Ascending aorta (tissue), 2 donors: ENCODE measurements at regions of chr10 and their contacts with region 1.

Region 1: DNA sequence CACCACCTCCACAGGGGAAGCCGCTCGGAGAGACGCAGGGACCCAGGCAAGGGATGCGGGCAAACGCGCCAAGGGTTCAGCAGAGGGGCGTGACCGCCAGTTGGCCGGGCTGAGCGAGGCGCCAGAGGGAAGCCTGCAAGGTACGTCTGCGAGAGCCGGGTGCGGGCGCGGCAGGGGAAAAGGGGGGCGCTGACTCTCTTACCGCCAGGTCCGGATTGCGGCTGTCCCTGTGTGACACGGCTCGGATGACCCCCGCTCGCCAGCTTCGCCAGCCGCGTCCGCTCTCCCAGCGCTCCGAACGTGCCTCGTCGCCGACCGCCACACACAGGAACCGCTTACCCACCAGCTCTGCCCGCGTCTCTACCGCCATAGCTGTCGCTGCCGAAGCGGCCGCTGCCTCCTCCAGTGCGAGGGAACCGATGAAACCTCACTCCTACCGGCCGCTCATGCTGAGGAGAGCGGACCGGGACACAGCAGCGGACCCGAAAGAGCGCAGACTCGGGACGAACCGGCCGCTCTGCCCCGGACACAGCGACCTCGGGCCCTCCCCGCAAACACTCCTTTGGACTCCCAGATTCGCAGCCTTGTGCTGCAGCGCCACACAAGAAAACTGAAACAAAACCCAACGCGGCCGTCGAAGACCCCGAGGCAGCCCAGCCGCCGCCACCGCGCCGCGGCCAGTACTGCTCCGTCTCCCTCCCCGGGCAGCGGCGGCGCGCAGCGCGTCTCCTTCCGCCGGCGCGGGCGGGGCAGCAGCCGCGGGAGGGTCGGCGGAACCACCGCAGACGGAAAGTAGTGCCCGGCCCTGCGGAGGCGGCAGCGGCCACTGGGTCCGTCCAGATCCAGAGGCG is at the start of gene JMJD1C:
- DNase-seq: peak; percentile 21 to 88
- H3K4me3 ChIP-seq: peak within 1 kb of the TSS; percentile 88 to 100
- H3K27ac ChIP-seq: peak within 1 kb of the TSS; percentile 88 to 99
- H3K4me1 ChIP-seq: peaks cover 0 to 19% of the 10 kb centered on the region in 2 donors
- H3K27me3 ChIP-seq: no peaks in the 10 kb centered on the region
- CTCF ChIP-seq: no peak
- total RNA-seq, gene JMJD1C: 65.0 TPM

Region 2: GRCh38 chr10:63217120-63217605 is 248.4 kb before region 1 on chr10:
- intact Hi-C with region 1: loop called (anchors 5 kb)
- DNase-seq: no peak
- H3K4me3 ChIP-seq: no peak overlapping the region
- H3K27ac ChIP-seq: no peak overlapping the region
- H3K4me1 ChIP-seq: no peaks in the 10 kb centered on the region
- H3K27me3 ChIP-seq: no peaks in the 10 kb centered on the region
- CTCF ChIP-seq: peak; percentile 49 to 70 (median 56)

Region 3: GRCh38 chr10:63268798-63269503 is 196.6 kb before region 1 on chr10:
- intact Hi-C with region 1: loop called (anchors 5 kb)
- DNase-seq: peak; percentile 81 to 95
- H3K4me3 ChIP-seq: peak overlapping the region; percentile 55 to 64
- H3K27ac ChIP-seq: peak overlapping the region; percentile 76 to 84
- H3K4me1 ChIP-seq: no peaks in the 10 kb centered on the region
- H3K27me3 ChIP-seq: no peaks in the 10 kb centered on the region
- CTCF ChIP-seq: peak; percentile 20 to 54 (median 45)

Region 4: GRCh38 chr10:63521416-63522276 is 56.1 kb after region 1 on chr10:
- intact Hi-C with region 1: loop called (anchors 2 kb)
- DNase-seq: peak in 1 of 2 donors; percentile 76
- H3K4me3 ChIP-seq: peak overlapping the region; percentile 81 to 90
- H3K27ac ChIP-seq: peak overlapping the region; percentile 97
- H3K4me1 ChIP-seq: peaks cover 0 to 23% of the 10 kb centered on the region in 2 donors
- H3K27me3 ChIP-seq: no peaks in the 10 kb centered on the region
- CTCF ChIP-seq: no peak

Region 5: GRCh38 chr10:63579371-63580014 is 114.0 kb after region 1 on chr10:
- intact Hi-C with region 1: loop called (anchors 5 kb)
- DNase-seq: no peak
- H3K4me3 ChIP-seq: no peak overlapping the region
- H3K27ac ChIP-seq: peak overlapping the region; percentile 56 to 69
- H3K4me1 ChIP-seq: peaks cover 8 to 60% of the 10 kb centered on the region in 2 donors
- H3K27me3 ChIP-seq: no peaks in the 10 kb centered on the region
- CTCF ChIP-seq: no peak

Region 6: GRCh38 chr10:63720072-63720537 is 254.6 kb after region 1 on chr10:
- intact Hi-C with region 1: loop called (anchors 5 kb)
- DNase-seq: no peak
- H3K4me3 ChIP-seq: peak overlapping the region in 1 of 2 donors; percentile 16
- H3K27ac ChIP-seq: peak overlapping the region; percentile 86 to 91
- H3K4me1 ChIP-seq: peaks cover 0 to 14% of the 10 kb centered on the region in 2 donors
- H3K27me3 ChIP-seq: no peaks in the 10 kb centered on the region
- CTCF ChIP-seq: peak; percentile 87 to 99 (median 97)

Region 7: DNA sequence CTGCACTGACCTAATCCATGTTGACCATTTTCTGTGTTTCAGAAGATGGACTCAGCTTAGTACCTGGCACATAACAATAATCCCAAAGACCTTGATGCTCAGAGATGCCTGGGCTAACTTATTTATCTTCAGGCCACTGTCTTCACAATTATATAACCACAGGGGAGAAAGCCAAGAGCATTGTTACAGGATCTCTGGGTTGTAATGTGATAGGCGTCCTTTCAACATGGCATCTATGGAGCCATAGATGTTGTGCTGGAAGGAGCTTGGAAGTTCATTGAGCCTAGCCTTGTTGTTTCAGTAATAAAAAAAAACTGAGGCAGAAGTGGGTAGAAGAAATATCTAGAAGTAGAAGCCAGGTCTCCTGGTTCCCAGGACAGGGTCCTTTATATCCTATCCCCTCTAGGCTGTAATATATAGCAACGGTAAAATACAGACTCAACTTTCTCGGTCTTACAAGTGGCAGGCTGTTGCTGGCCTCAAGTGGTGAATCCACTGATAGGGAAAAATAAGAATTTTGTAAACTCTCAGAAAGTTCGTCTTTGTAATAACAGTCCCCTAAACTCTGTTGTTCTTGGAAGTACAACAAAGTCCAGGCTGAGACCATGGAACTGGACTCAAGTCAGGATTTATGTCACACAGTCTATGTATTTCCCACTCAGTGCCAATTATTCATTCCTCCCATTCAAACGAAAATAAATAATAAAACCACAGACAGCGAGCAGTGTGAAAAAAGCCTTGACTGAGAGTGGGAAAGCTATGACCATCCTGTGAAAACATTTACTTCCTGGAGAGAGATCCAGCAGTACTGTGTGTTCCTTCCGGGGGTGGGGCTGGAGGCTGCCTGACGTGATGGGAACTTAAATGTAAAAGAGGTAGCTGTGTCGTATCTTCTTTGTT is 333.3 kb after region 1 on chr10:
- intact Hi-C with region 1: loop called (anchors 5 kb)
- DNase-seq: peak; percentile 58 to 91
- H3K4me3 ChIP-seq: peak overlapping the region in 1 of 2 donors; percentile 35
- H3K27ac ChIP-seq: peak overlapping the region; percentile 73 to 74
- H3K4me1 ChIP-seq: peaks cover 5 to 18% of the 10 kb centered on the region in 2 donors
- H3K27me3 ChIP-seq: no peaks in the 10 kb centered on the region
- CTCF ChIP-seq: peak in 1 of 3 experiments; percentile 24

Region 8: GRCh38 chr10:63901228-63901627 is 435.7 kb after region 1 on chr10:
- intact Hi-C with region 1: no loop called
- DNase-seq: no peak
- H3K4me3 ChIP-seq: no peak overlapping the region
- H3K27ac ChIP-seq: no peak overlapping the region
- H3K4me1 ChIP-seq: no peaks in the 10 kb centered on the region
- H3K27me3 ChIP-seq: no peaks in the 10 kb centered on the region
- CTCF ChIP-seq: no peak